Sigmoid colon (tissue), 7 donors: ENCODE measurements at regions of chr2 and their contacts with region 1.

Region 1: DNA sequence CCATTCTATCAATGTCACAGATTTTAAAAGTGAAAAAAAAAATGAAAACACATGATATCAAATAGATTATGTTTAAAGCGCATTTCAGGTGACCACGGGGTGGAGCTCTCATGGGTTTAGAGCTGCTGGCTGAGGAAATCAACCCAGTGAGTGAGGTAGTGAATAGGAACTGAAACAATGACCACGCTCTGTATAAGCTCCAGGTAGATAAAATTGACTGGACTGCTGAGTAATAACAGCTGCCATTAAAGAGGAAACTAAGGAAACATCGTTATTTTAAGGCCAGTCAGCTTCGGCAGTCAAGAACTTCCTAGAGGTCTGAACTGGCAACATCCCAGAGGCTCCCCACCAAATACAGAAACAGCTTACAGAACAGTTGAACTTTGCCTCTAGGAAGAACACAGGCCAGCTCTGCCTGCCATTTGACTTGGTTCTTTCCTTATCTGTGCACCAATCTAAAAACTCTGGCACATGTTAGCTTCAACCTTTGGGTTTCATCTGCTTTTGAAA is 185.9 kb downstream of the PDE1A start:
- DNase-seq: peak; percentile 65
- H3K4me3 ChIP-seq: no peak overlapping the region
- H3K27ac ChIP-seq: no peak overlapping the region
- H3K4me1 ChIP-seq: peaks cover 0 to 6% (median 0%) of the 10 kb centered on the region in 4 donors
- H3K27me3 ChIP-seq: no peaks in the 10 kb centered on the region
- CTCF ChIP-seq: peak in 3 of 4 experiments; percentile 8 to 33 (median 14)
- EP300 ChIP-seq: no peak
- POLR2A ChIP-seq: no peak

Region 2: GRCh38 chr2:182406221-182406620 is 165.3 kb after region 1 on chr2:
- intact Hi-C with region 1: no loop called
- DNase-seq: no peak
- H3K4me3 ChIP-seq: no peak overlapping the region
- H3K27ac ChIP-seq: no peak overlapping the region
- H3K4me1 ChIP-seq: no peaks in the 10 kb centered on the region
- H3K27me3 ChIP-seq: no peaks in the 10 kb centered on the region
- CTCF ChIP-seq: no peak
- EP300 ChIP-seq: no peak
- POLR2A ChIP-seq: no peak

Region 3: DNA sequence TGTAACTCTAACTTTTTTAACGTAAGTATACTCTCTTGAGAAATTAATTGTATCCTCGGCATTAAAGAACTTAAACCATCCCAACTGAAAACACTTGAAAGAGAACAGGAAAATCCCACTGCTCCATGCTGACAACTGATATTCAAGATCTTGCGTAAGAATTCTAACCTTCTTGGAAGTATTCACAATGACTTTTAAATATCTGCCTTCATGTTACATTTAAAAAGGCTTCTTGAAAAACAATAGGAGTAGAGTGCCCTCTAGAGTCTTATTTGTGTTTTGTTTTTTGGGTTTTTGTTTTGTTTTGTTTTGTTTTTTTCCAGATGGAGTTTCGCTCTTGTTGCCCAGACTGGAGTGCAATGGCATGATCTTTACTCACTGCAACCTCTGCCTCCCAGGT is 409.8 kb after region 1 on chr2:
- intact Hi-C with region 1: loop called (anchors 2 kb)
- DNase-seq: no peak
- H3K4me3 ChIP-seq: no peak overlapping the region
- H3K27ac ChIP-seq: no peak overlapping the region
- H3K4me1 ChIP-seq: no peaks in the 10 kb centered on the region
- H3K27me3 ChIP-seq: no peaks in the 10 kb centered on the region
- CTCF ChIP-seq: peak; percentile 26 to 52 (median 48)
- EP300 ChIP-seq: no peak
- POLR2A ChIP-seq: no peak